Ascending aorta (tissue), 2 donors: ENCODE measurements at regions of chr5 and their contacts with region 1.

Region 1: DNA sequence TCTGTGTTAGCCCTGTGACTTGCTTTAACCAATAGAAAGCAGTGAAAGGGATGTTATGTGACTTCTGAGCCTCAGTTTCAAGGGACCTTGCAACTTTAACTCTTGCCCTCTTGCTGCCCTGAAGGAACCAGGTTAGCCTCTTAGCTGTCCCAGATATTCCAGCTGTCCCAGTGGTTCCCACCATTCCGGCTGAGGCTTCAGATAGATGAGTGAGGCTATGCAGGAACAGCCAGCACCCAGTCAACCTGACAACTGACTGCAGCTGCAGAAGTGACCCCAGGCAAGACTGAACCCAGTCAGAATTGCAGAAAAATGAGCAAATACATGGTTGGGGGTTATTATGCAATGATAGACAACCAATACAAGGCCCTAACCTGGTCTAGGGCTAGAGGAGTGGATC is 10.4 kb upstream of the CDC23 start:
- DNase-seq: no peak
- H3K4me3 ChIP-seq: no peak overlapping the region
- H3K27ac ChIP-seq: no peak overlapping the region
- H3K4me1 ChIP-seq: no peaks in the 10 kb centered on the region
- H3K27me3 ChIP-seq: no peaks in the 10 kb centered on the region
- CTCF ChIP-seq: no peak

Region 2: GRCh38 chr5:137933491-137933911 is 290.0 kb before region 1 on chr5:
- intact Hi-C with region 1: no loop called
- DNase-seq: no peak
- H3K4me3 ChIP-seq: no peak overlapping the region
- H3K27ac ChIP-seq: peak overlapping the region; percentile 1 to 51
- H3K4me1 ChIP-seq: peaks cover 0 to 5% of the 10 kb centered on the region in 2 donors
- H3K27me3 ChIP-seq: no peaks in the 10 kb centered on the region
- CTCF ChIP-seq: no peak

Region 3: GRCh38 chr5:138282920-138283742 is 59.6 kb after region 1 on chr5:
- intact Hi-C with region 1: loop called (anchors 2 kb)
- DNase-seq: no peak
- H3K4me3 ChIP-seq: no peak overlapping the region
- H3K27ac ChIP-seq: no peak overlapping the region
- H3K4me1 ChIP-seq: no peaks in the 10 kb centered on the region
- H3K27me3 ChIP-seq: no peaks in the 10 kb centered on the region
- CTCF ChIP-seq: peak; percentile 12 to 38 (median 15)

Region 4: DNA sequence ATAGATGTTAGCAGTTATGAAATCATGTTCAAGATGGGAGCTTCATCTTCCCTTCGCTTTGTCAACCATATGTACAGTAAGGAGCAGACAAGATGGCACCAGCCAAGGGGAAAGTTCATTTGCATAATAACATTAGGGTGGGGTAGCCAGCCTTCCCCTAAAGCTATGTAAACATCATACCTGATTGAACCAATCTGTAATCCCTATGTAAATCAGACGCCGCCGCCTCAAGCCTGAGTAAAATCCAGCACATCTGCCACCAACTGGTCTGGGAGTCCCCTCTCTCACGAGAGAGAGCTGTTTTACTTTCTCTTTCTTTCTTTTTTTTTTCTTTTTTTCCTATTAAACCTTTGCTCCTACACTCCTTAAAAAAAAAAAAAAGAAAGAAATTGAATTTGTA is 184.5 kb after region 1 on chr5:
- intact Hi-C with region 1: loop called (anchors 2 kb)
- DNase-seq: no peak
- H3K4me3 ChIP-seq: no peak overlapping the region
- H3K27ac ChIP-seq: no peak overlapping the region
- H3K4me1 ChIP-seq: no peaks in the 10 kb centered on the region
- H3K27me3 ChIP-seq: no peaks in the 10 kb centered on the region
- CTCF ChIP-seq: no peak